PC-9 (cell line): ENCODE measurements at regions of chr12 and their contacts with region 1.

Region 1: GRCh38 chr12:57590536-57591479 is at the start of gene PIP4K2C:
- DNase-seq: peak; percentile 76 to 86
- H3K4me3 ChIP-seq: peak within 1 kb of the TSS; percentile 97
- H3K27ac ChIP-seq: no peak within 1 kb of the TSS
- H3K4me1 ChIP-seq: peaks cover 15% of the 10 kb centered on the region
- H3K27me3 ChIP-seq: peaks cover 16% of the 10 kb centered on the region
- CTCF ChIP-seq: no peak
- total RNA-seq, gene PIP4K2C: 47.7 and 48.7 TPM in 2 replicates

Region 2: DNA sequence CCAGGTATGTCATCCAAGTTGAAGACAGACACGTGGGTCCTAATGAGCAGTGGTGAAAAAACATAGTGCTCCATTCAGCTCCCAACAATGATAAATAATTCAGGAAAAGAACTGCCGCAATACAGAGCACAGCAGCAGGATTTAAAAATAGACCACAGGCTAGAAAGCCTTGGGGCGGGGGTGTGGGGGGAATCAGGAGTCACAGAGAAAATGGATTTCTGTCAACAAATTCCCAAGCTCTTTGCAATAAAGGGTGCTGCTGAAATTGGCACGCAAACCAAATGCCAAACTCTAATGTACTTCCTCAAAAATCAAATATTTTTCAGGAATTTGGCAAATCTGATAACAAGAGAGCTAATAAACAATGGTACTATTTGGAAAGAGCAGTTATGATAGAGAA is 218.6 kb before region 1 on chr12:
- CTCF ChIA-PET with region 1: no interaction called
- POLR2A ChIA-PET with region 1: no interaction called
- intact Hi-C with region 1: no loop called
- DNase-seq: no peak
- H3K4me3 ChIP-seq: no peak overlapping the region
- H3K27ac ChIP-seq: no peak overlapping the region
- H3K4me1 ChIP-seq: no peaks in the 10 kb centered on the region
- H3K27me3 ChIP-seq: no peaks in the 10 kb centered on the region
- CTCF ChIP-seq: no peak

Region 3: DNA sequence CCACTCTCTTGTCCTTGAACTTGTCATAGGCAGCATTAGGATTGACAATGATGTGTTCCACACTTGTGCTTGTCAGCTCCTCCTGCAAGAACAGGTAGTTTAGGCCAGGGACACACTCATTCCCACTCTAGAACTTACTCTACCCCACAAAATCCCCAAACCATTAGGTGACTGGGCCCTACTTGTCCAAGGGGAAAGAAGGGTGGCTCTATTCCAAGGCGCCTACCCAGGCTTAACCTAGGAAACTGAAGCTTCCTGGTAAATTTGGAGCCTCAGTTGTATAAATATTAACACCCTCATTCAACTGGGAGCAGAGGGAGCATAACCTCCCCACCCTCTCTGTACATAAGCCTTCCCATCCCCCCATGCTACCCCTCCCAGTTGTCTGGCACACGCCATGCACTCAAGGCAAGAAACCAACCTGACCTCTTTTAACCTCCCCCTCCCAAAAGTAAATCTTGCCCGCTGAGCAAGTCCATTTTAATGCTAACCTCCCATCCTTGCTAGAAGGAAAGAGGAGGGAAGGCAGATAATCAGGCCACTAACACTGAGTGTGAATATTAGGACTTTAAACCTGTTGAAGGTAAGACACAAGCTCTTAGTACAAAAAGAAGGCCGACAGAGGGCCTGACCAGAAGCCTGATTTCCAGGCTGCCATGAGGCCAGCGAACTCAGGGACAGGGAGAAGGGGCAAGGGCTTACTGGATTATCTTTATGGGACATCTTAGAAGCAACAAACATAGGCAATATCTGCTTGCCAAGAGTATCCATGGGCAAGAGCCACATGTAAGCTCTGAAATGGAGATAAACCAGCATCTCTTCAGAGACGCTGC is 54.8 kb before region 1 on chr12:
- CTCF ChIA-PET with region 1: no interaction called
- POLR2A ChIA-PET with region 1: no interaction called
- intact Hi-C with region 1: no loop called
- DNase-seq: no peak
- H3K4me3 ChIP-seq: no peak overlapping the region
- H3K27ac ChIP-seq: no peak overlapping the region
- H3K4me1 ChIP-seq: no peaks in the 10 kb centered on the region
- H3K27me3 ChIP-seq: no peaks in the 10 kb centered on the region
- CTCF ChIP-seq: no peak

Region 4: DNA sequence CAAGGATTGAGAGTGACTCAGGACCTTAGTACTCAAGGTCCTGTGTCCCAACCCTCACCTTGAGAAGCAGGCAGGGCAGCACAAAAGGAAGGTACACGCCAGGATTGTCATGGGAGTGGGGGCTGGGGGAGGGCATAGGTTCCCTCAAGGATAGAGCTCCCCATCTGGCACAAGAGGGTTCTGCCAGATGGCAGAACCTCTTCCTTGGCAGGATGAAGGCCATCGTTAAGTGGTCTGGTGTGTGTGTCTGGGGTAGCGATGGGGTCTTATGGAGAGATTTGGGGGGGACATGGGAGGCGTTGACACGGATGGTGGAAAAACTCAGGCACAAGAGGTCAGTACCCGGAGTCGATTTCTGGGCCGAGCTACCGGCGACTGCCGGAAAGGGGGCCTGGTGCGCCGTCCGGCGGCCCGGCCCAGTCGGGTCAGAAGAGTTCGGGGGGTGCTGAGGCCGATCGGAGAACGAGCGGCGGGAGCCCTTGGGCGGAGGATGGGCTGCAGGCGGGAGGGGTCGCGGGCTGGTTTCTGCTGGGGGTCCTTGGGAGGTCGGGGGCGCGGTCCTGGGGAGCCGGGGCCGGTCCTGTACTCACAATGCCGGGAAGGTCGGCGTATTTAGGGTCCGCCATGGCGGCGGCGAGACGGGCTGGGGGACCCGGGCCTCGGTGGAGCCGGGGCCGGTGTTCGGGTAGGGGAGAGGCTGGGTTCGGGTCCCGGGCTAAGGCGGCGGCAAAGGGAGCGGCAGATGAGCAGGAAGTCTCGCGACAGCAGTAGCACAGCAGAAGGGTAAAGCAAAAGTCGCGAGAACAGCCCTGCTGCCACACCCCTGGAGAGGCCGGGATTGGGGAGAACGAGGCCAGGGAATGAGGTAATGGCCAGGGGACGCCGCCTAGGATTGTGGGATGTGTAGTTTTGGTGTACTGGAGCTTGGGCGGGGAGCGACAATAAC is 44.1 kb before region 1 on chr12 and contains the start of gene DCTN2:
- CTCF ChIA-PET with region 1: no interaction called
- POLR2A ChIA-PET with region 1: interaction called, 6 read pairs
- intact Hi-C with region 1: loop called (anchors 2 kb)
- DNase-seq: peak; percentile 89 to 93
- H3K4me3 ChIP-seq: peak within 1 kb of the TSS; percentile 59
- H3K27ac ChIP-seq: peak within 1 kb of the TSS; percentile 45
- H3K4me1 ChIP-seq: peaks cover 9% of the 10 kb centered on the region
- H3K27me3 ChIP-seq: no peaks in the 10 kb centered on the region
- CTCF ChIP-seq: no peak; the same call in 1 of the 2 replicates
- total RNA-seq, gene DCTN2: 93.4 and 105 TPM in 2 replicates

Region 5: GRCh38 chr12:57604454-57604991 is 13.7 kb after region 1 on chr12 and contains the start of gene DTX3:
- CTCF ChIA-PET with region 1: no interaction called
- POLR2A ChIA-PET with region 1: no interaction called
- intact Hi-C with region 1: loop called (anchors 1 kb)
- DNase-seq: no peak
- H3K4me3 ChIP-seq: no peak within 1 kb of the TSS
- H3K27ac ChIP-seq: no peak within 1 kb of the TSS
- H3K4me1 ChIP-seq: no peaks in the 10 kb centered on the region
- H3K27me3 ChIP-seq: peaks cover 34% of the 10 kb centered on the region
- CTCF ChIP-seq: no peak
- total RNA-seq, gene DTX3: 16.2 and 18.1 TPM in 2 replicates

Region 6: DNA sequence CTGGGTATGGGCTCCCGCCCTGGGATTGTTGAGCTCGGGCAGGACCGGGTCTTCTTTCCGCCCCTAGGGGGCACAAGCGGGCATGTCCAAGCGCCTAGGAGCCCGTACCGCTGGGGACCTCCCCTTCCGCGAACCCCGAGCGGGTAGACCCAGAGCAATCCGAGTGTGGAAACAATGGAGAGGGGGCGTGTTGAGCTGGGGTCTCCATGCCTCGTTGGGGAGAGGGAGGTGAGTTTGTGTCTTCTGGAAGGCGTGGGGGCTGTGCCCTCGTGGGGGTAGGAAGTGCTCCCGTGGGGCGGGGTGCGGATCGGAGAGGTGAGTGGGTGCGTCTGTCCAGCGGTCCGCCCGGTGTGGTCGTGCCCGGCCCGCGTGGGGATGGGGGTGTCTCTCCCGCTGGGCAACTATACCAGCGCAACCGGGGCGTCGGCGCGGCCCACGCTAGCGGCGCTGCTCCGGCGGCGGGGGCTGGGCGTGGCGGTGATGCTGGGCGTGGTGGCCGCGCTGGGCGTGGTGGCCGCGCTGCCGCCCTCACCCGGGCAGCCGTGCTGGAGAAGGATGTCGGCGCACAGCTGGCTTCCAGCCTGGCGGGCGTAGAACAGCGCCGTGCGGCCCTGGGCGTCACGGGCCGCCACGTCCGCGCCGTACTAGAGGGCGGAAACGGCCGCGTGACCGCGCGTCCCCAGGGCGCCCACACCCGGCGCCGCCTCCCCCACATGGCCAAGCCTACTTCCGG is 135.5 kb after region 1 on chr12:
- CTCF ChIA-PET with region 1: no interaction called
- POLR2A ChIA-PET with region 1: no interaction called
- intact Hi-C with region 1: loop called (anchors 10 kb)
- DNase-seq: peak; percentile 58 to 85
- H3K4me3 ChIP-seq: peak overlapping the region; percentile 80
- H3K27ac ChIP-seq: no peak overlapping the region
- H3K4me1 ChIP-seq: no peaks in the 10 kb centered on the region
- H3K27me3 ChIP-seq: peaks cover 7% of the 10 kb centered on the region; the same call in 1 of the 2 replicates
- CTCF ChIP-seq: peak; percentile 89

Region 7: GRCh38 chr12:57965766-57966165 is 375.0 kb after region 1 on chr12:
- CTCF ChIA-PET with region 1: no interaction called
- POLR2A ChIA-PET with region 1: no interaction called
- intact Hi-C with region 1: no loop called
- DNase-seq: no peak
- H3K4me3 ChIP-seq: no peak overlapping the region
- H3K27ac ChIP-seq: no peak overlapping the region
- H3K4me1 ChIP-seq: no peaks in the 10 kb centered on the region
- H3K27me3 ChIP-seq: no peaks in the 10 kb centered on the region
- CTCF ChIP-seq: no peak